ENCODE measurements at regions of chr2 and their contacts with region 1.

Region 1: GRCh38 chr2:223692191-223692947 is 90.2 kb upstream of the SCG2 start:
- DNase-seq: no peak
- H3K4me3 ChIP-seq: no peak overlapping the region
- H3K27me3 ChIP-seq: no peaks in the 10 kb centered on the region
- CTCF ChIP-seq: peak; percentile 77

Region 2: DNA sequence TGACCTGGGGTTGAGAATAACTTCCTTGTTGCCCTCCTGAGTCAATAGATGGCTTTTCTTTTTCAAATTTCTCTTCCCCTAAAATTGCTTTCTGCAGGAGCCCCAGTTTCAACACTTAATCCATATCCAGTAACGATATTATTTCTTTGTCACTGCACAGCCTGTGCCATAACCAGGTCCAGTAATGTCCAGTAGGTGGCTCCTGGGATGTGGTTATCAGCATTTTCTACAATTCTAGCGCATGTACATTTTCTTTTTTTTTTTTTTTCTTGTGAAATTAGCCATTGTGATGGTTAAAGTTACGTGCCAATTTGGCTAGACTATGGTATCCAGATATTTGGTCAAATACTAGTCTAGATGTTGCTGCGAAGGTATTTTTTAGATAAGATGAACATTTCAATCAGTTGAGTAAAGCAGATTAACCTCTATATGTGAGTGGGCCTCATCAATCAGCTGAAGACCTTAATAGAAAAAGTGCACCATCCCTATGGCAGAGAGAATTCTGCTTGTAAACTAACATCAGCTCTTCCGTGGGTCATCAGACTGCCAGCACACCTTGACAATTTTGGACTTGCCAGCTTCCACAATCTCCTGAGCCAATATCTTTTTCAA is 17.3 kb before region 1 on chr2:
- CTCF ChIA-PET with region 1: interaction called, 15 read pairs
- POLR2A ChIA-PET with region 1: no interaction called
- DNase-seq: no peak
- H3K4me3 ChIP-seq: no peak overlapping the region
- H3K27me3 ChIP-seq: no peaks in the 10 kb centered on the region
- CTCF ChIP-seq: peak; percentile 70